ENCODE measurements at regions of chr13 and their contacts with region 1.

Region 1: DNA sequence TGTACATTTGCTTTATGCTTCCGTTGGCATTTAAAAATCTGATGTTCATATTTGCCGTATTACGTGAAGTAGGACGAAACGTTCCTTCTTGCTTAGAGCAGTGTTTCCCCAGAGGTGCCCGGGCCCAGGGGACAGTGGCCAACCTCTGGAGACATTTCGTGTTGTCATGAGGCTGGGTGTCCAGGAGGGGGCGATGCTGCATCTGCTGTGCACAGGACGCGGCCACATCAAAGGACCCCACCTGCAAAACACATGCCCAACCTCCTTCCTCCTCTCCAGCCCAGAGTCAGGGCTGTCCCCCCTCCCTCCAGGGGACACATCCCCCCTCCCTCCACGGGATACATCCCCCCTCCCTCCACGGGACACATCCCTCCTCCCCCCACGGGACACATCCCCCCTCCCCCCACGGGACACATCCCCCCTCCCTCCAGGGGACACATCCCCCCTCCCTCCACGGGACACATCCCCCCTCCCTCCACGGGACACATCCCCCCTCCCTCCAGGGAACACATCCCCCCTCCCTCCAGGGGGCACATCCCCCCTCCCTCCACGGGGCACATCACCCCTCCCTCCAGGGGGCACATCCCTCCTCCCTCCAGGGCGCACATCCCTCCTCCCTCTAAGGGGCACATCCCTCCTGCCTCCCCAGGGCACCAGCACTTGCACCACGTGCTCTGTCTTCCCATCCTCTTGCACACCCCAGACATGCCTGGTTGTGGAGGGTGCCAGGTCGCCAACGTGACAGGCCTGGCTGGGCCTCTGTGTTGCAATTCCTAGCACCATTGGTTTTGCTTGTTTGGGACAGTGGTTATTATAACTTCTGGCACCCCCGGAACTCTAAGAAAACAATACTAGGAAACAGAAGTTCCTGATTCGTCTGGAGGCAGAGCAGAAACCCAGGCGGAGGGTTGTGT is 46.7 kb downstream of the GAS6 start:
- DNase-seq: peak; percentile 94
- H3K4me3 Mint-ChIP-seq: peak overlapping the region; percentile 91
- H3K27ac Mint-ChIP-seq: no peak overlapping the region
- H3K4me1 Mint-ChIP-seq: peaks cover 21% of the 10 kb centered on the region
- H3K27me3 Mint-ChIP-seq: no peaks in the 10 kb centered on the region

Region 2: DNA sequence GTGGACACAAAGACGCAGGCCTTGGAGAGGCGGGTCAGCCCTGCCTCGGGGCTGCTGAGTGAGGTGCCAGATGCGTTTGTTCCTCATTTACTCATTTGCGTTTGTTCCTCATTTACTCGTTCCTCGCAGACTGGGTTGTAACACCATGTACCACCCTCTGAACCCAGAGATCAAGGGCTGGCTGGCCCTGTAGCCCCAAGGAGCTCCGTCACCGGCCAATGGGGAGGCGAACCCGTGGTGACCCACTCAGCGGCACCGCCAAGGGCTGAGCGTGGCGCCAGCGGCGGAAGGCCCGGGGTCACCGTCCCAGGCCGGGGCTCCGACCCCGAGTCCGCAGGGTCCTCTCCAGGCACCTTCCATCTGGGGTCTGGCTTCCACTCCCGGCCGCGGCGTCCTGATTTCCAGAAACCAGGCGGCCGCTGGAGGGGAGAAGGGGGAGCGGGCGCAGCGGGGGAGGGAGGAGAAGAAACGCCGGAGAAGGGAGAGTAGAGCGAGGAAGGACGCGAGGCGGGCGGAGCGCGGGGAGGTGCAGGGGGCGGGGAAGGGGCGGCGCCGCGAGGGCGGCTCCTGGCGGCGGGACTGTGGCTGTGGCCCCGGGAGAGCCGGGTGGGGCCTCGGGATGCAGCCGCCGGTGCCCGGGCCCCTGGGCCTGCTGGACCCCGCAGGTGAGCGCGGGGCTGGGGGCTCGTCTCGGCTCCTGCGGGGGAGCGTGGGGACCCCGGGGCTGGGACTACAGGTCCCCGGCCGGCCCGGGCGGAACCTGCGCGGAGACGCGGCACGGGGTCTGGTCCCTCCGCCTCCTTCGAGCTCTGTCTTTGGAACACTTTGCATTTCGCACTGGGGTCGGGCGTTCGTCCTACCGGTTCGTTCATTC is 58.3 kb before region 1 on chr13 and contains the start of gene TMEM255B:
- CTCF ChIA-PET with region 1: no interaction called
- intact Hi-C with region 1: loop called (anchors 2 kb)
- DNase-seq: peak; percentile 82
- H3K4me3 Mint-ChIP-seq: peak within 1 kb of the TSS; percentile 86
- H3K27ac Mint-ChIP-seq: no peak within 1 kb of the TSS
- H3K4me1 Mint-ChIP-seq: peaks cover 15% of the 10 kb centered on the region
- H3K27me3 Mint-ChIP-seq: peaks cover 38% of the 10 kb centered on the region
- total RNA-seq, gene TMEM255B: 1.1 TPM

Region 3: GRCh38 chr13:113801289-113802144 is 15.7 kb before region 1 on chr13:
- CTCF ChIA-PET with region 1: no interaction called
- intact Hi-C with region 1: no loop called
- DNase-seq: no peak
- H3K4me3 Mint-ChIP-seq: no peak overlapping the region
- H3K27ac Mint-ChIP-seq: no peak overlapping the region
- H3K4me1 Mint-ChIP-seq: no peaks in the 10 kb centered on the region
- H3K27me3 Mint-ChIP-seq: no peaks in the 10 kb centered on the region

Region 4: DNA sequence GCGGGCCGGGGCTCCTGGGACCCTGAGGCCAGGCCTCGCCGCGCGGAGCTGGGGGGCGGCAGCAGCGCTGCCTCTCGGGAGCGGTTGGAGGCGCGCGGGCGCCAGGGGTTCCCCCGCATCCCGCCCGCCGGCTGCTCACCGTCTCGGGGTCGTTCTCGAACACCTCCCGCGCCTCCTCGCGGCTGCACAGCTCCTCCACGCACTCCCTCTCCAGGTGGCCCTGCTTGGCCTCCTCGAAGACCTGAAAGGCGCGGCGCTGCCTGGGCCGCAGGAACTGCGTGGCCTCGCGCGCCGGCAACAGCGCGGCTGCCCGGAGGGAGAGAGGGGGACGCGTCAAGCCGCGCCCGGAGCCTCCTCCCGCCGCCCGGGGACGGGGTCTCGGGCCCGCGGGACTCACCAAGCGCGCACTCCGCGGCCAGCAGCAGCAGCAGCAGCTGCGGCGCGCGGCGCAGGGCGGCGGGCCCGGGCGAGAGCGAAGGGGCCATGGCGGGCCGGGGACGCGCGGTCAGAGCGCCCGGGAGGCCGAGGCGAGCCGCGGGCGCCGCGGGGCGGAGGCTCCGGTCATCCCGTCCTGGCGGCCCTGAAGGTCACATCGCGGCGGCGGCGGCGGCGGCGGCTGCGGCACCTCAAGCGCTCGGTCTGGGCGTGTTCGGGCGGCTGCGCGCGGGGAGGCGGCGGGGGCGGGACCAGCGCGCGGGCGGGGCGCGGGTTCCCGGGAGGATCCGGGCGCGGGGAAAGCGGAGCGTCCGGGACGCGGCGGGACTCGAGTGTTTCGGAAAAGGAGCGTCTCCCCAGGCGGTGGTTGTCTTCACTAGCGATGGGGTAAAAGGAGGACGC is 46.5 kb after region 1 on chr13 and contains the start of gene GAS6:
- CTCF ChIA-PET with region 1: no interaction called
- intact Hi-C with region 1: loop called (anchors 1 kb)
- DNase-seq: peak; percentile 31
- H3K4me3 Mint-ChIP-seq: peak within 1 kb of the TSS; percentile 67
- H3K27ac Mint-ChIP-seq: no peak within 1 kb of the TSS
- H3K4me1 Mint-ChIP-seq: peaks cover 7% of the 10 kb centered on the region
- H3K27me3 Mint-ChIP-seq: peaks cover 46% of the 10 kb centered on the region
- total RNA-seq, gene GAS6: 1.7 to 3.2 TPM

Region 5: DNA sequence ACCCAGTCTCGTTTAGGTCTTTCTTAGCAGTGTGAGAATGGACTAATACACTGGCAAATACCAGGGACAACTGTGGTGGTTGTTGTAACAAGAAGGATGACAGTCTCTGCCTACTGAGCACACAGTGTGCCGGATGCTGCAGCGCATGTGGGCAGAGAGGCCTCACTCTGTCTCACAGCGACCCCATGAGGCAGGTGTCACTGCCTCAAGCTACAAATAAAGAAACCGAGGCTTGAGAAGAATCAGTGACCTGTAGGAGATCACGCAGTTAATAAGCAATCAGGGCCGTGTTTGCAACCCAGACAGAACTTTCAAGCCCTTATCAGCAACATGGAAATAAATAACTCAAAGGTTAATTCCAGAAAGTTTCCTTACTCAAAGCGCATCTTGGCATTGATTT is 87.2 kb after region 1 on chr13:
- CTCF ChIA-PET with region 1: no interaction called
- intact Hi-C with region 1: loop called (anchors 2 kb)
- DNase-seq: peak; percentile 54
- H3K4me3 Mint-ChIP-seq: no peak overlapping the region
- H3K27ac Mint-ChIP-seq: no peak overlapping the region
- H3K4me1 Mint-ChIP-seq: peaks cover 9% of the 10 kb centered on the region
- H3K27me3 Mint-ChIP-seq: peaks cover 15% of the 10 kb centered on the region

Region 6: DNA sequence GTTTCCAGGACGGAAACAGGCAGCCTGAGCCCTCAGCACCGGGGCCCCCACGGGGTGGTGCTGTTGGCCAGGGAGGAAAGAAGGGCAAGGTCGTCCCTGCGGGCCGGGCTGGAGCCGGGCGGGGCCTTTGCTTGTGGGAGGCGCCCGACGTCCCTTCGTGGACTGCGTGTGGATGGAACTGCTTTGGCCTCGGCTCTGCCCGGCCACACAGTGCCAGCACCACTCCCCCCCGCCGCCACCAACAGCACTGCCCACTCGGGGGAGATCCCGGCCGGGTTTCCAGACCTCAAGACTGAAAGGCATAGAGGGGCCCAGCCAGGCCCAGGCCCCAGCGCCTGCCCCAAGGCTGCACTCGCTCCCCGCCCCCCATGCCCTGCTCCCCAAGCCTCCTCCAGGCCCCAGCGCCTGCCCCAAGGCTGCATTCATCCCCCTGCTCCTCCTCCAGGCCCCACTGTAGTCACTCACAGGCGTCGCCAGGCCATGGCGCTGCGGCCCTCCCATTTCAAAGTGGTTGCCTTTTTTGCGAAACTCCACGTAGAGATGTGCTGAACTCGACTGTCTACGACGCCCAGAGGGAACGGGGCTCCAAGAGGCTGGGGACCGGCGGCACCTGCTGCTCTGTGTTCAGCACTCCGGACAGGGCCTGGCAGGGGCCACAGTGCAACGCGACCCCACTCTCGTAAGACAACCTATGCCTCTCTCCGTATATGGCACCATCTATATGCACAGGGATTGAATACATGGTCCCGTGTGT is 134.2 kb after region 1 on chr13:
- CTCF ChIA-PET with region 1: no interaction called
- intact Hi-C with region 1: loop called (anchors 5 kb)
- DNase-seq: peak; percentile 80
- H3K4me3 Mint-ChIP-seq: peak overlapping the region; percentile 32
- H3K27ac Mint-ChIP-seq: no peak overlapping the region
- H3K4me1 Mint-ChIP-seq: peaks cover 2% of the 10 kb centered on the region
- H3K27me3 Mint-ChIP-seq: no peaks in the 10 kb centered on the region

Region 7: DNA sequence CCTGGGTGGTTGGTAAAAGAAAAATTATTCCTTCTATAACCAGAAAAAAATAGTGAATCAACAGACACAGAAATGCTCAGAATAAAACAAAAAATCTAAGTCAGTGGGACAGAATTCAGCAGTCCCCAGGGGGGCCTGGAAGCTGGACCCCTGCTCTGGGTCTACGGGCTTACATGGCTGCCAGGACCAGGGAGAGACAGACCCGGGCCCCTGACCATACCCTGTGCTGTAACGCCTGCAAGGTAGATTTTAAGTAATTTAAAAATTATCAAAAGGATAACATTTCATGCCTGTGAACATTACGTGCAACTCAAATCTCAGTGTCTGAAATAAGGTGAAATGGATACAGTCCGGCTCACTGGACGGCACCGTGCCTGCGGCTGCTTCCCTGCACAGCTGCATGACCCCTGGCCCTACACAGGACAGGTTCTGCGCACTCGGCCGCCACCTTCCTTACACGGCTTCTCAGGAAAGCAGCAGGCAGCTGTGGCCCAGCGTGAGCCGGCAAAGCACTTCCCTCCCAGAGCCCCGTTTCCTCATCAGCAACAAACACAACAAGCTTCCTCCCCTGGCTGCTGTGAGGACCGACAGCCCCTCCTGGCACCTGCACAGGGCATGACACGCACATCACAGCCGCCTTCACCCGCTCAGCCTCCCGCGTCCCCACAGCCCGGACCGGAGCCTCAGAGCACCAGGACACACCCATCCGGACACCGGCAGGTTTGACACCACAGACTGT is 293.1 kb after region 1 on chr13:
- CTCF ChIA-PET with region 1: no interaction called
- intact Hi-C with region 1: loop called (anchors 2 kb)
- DNase-seq: peak; percentile 88
- H3K4me3 Mint-ChIP-seq: peak overlapping the region; percentile 82
- H3K27ac Mint-ChIP-seq: peak overlapping the region; percentile 90
- H3K4me1 Mint-ChIP-seq: peaks cover 83% of the 10 kb centered on the region
- H3K27me3 Mint-ChIP-seq: no peaks in the 10 kb centered on the region

Measured in activated naive CD4-positive, alpha-beta T cell treated with anti-CD3 and anti-CD28 coated beads for 36 hours (primary cell).